Astrocyte of the cerebellum (primary cell): ENCODE measurements at regions of chr5 and their contacts with region 1.

Region 1: DNA sequence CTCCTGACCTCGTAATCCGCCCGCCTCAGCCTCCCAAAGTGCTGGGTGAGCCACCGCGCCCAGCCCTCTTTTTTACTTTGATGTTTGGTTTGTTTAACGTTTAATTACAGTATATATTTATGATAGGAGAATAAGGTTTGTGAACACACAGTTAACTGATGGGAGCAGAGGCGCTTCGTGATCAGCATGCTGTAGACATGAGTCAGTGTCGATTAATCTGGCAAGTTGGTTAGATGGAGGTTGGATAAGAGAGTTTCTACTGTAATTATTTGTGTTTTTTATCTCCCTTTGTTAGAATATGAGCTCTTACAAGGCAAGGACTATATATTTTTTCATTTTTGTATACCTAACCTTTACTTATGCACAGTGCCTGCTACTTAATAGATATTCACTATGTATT is 14.3 kb downstream of the ATG10 start:
- DNase-seq: no peak
- H3K4me3 ChIP-seq: no peak overlapping the region
- CTCF ChIP-seq: no peak

Region 2: DNA sequence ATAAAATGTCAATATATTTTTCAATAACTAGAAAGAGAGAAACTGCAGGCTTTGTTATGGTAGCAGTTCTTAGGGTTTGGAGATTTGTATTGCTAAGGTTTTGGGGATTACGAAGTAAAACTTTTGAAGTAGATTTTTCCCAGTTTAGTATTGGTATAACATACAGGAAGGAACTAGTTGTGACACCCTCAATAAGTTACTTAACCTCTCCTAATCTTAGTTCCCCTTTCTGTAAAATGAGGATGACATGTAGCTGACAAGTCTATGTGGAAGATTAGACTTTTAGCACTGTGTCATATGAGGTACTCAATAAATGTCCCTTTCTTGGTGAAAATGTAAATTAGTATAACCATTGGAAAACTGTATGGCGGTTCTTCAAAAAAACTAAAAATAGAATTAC is 87.7 kb before region 1 on chr5:
- in situ Hi-C with region 1: loop called (anchors 5 kb)
- DNase-seq: no peak
- H3K4me3 ChIP-seq: no peak overlapping the region
- CTCF ChIP-seq: no peak

Region 3: GRCh38 chr5:82349651-82350050 is 363.5 kb after region 1 on chr5:
- in situ Hi-C with region 1: no loop called
- DNase-seq: no peak
- H3K4me3 ChIP-seq: no peak overlapping the region
- CTCF ChIP-seq: peak; percentile 35